A673 (cell line): ENCODE measurements at regions of chr6 and their contacts with region 1.

Region 1: GRCh38 chr6:4775584-4776494 is at the start of gene CDYL:
- DNase-seq: peak; percentile 95
- H3K4me3 ChIP-seq: peak within 1 kb of the TSS; percentile 55
- H3K27ac ChIP-seq: peak within 1 kb of the TSS; percentile 35
- H3K4me1 ChIP-seq: peaks cover 4% of the 10 kb centered on the region
- H3K27me3 ChIP-seq: no peaks in the 10 kb centered on the region
- CTCF ChIP-seq: no peak
- total RNA-seq, gene CDYL: 57.6 and 66.6 TPM in 2 replicates

Region 2: DNA sequence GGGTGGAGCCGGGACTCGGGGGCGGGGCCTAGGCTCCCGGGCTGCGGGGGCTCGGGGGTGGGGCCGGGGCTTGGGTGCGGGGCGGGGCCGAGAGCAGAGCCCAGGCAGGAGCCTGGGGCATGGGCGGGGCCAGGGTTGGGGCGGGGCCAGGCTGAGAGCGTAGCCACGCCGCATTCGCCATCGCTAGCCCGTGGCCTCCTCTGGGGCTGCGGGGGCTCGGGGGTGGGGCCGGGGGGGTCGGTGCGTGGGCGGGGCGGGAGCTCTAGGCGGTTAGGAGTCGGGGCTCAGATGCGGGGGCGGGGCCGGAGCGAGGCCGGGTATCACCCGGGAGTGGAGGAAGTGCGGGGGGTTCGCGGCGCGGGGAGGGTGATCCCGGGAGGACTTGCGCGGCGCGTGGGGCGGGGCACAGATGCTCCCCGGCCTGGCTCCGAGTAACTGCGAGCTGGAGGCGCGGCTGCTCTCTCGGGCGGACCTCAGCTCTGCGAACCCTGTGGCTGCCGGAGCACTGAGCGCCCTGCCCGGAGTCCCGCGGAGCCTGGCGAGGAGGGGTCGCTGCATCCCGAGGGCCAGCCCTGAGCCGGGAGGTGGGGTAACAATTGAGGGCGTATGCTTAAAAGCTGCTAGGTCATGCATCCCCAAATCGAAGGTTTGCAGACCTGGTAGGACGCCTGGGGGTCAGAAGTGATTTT is 640.0 kb before region 1 on chr6:
- CTCF ChIA-PET with region 1: no interaction called
- POLR2A ChIA-PET with region 1: no interaction called
- intact Hi-C with region 1: no loop called
- DNase-seq: peak; percentile 96
- H3K4me3 ChIP-seq: peak overlapping the region; percentile 56
- H3K27ac ChIP-seq: peak overlapping the region; percentile 75
- H3K4me1 ChIP-seq: peaks cover 2% of the 10 kb centered on the region
- H3K27me3 ChIP-seq: no peaks in the 10 kb centered on the region
- CTCF ChIP-seq: no peak

Region 3: DNA sequence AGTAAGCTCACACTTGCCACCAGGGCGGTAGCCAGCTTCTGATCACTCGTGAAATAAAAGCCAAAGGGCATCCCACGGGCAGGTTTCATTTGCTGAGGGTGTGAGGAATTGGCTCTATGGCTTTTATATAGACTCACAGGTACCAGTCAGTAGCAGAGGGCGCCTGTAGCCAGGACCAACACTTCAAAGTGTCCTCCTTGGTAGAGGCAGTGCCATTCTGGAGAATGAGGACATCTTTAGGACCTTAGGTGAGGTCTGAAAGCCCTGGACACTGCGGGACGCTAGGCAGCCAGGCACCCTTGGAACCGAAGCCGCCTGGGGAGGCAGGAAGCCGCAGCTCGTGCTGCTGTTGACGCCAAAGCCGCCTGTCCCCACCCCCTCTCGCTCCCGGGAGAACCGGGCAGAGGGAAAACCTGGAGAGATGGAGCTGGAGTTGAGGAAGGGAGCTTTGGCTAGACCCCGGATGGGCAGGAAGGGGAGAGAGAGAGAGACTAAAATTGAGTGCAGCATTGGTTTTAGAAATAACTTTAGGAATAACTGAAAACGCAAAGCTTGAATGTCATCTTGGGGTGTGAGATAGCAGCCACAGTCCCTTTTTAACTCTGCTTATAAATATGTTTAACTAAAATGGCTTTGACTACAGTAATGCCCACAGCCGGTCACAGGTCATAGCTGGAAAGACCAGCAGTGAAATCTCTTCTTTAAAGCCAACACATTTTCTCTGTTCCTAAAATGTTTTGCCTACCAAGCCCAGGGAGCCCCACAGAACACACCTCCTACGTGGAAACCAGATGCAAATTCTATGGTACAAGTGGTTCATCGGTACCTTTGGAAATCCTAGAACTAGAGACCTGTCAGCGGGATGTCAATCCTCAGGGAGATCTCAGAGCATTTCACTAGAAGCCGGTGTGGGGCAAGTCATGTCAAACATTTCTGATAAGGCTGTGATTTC is 128.1 kb before region 1 on chr6:
- CTCF ChIA-PET with region 1: no interaction called
- POLR2A ChIA-PET with region 1: no interaction called
- intact Hi-C with region 1: loop called (anchors 5 kb)
- DNase-seq: peak; percentile 89
- H3K4me3 ChIP-seq: peak overlapping the region; percentile 12
- H3K27ac ChIP-seq: no peak overlapping the region
- H3K4me1 ChIP-seq: peaks cover 5% of the 10 kb centered on the region
- H3K27me3 ChIP-seq: no peaks in the 10 kb centered on the region
- CTCF ChIP-seq: no peak

Region 4: GRCh38 chr6:4941782-4942672 is 166.2 kb after region 1 on chr6:
- CTCF ChIA-PET with region 1: no interaction called
- POLR2A ChIA-PET with region 1: no interaction called
- intact Hi-C with region 1: no loop called
- DNase-seq: peak; percentile 81
- H3K4me3 ChIP-seq: no peak overlapping the region
- H3K27ac ChIP-seq: peak overlapping the region; percentile 47
- H3K4me1 ChIP-seq: peaks cover 65% of the 10 kb centered on the region
- H3K27me3 ChIP-seq: no peaks in the 10 kb centered on the region
- CTCF ChIP-seq: no peak

Region 5: DNA sequence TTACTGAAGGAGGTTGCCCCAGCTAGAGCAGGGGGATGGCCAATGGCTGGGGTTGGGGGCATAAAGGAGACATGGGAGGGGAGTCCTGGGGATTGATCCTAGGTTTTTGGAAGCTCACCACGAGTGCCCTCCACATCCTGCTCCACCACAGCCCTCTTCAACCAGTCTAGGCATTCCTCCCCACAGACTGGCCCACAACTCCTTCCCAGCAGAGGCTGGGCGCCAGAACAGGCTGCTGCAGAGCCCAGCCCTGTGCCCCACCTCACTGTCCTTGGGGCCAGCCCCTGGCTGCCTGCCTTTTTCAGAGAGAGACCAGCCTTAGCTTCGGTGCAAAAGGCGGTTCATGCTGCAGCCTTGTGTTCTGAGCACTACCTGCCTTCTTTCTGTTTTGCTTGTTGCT is 211.6 kb after region 1 on chr6:
- CTCF ChIA-PET with region 1: no interaction called
- POLR2A ChIA-PET with region 1: interaction called, 14 read pairs
- intact Hi-C with region 1: no loop called
- DNase-seq: no peak
- H3K4me3 ChIP-seq: no peak overlapping the region
- H3K27ac ChIP-seq: no peak overlapping the region
- H3K4me1 ChIP-seq: peaks cover 12% of the 10 kb centered on the region
- H3K27me3 ChIP-seq: no peaks in the 10 kb centered on the region
- CTCF ChIP-seq: no peak